Dendritic cell treated with granulocyte-macrophage colony-stimulating factor and Interleukin-4, amounts not matched to agents 40 ng/mL and 50 ng/mL, for 4 days (primary cell): ENCODE measurements at regions of chr13 and their contacts with region 1.

Region 1: DNA sequence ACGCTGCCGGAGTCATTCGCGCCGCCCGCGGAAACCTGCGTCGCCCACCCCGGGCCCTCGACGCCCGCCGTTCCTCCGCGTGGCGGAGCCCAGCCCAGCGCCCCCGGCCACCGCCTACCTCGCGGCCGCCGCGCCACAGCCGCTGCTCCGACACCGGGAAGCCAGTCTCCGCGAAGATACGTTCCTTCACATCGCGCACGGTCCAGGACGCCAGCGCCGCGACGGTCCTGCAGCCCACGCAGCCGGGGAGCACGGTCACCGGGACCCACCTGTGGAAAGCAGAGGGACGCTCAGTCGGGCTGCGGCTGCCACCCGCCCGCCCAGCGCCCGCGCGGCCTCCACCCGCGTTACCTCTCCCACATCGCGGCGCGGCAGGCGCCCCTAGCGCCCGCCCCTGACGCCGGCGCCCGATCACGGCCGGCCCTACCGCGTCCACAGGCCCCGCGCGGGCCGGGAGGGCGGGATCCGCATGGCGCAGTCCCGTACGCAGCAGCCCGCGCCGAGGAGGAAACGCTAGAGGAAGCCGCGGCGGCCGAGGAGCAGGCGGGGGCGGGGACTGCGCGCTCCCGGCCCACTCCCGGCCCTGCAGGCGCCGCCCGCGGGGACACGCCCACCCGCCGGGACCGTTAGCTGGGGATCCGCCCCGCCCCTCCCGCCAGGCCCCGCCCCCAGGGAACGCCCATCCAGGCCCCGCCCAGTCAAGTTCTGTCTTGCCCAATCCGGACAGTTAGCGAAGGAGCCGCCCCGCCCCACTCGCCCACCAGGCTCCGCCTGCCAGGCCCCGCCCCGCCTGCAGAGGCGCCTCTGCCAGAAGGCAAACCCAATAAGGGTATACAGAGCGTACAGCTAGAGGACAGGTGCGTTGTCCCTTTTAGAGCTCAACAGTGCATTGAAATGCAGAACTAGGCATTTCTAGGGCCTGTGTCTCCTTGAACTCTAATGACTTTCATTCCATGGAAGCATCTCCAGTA is 58.2 kb downstream of the SACS start:
- H3K4me3 Mint-ChIP-seq: peak overlapping the region; percentile 73
- H3K27ac Mint-ChIP-seq: peak overlapping the region; percentile 55
- H3K4me1 Mint-ChIP-seq: peaks cover 52% of the 10 kb centered on the region
- H3K27me3 Mint-ChIP-seq: peaks cover 11% of the 10 kb centered on the region

Region 2: GRCh38 chr13:21613791-21614190 is 1761.5 kb before region 1 on chr13:
- intact Hi-C with region 1: loop called (anchors 5 kb)
- H3K4me3 Mint-ChIP-seq: no peak overlapping the region
- H3K27ac Mint-ChIP-seq: no peak overlapping the region
- H3K4me1 Mint-ChIP-seq: peaks cover 6% of the 10 kb centered on the region
- H3K27me3 Mint-ChIP-seq: peaks cover 2% of the 10 kb centered on the region

Region 3: GRCh38 chr13:23466144-23467002 is 91.1 kb after region 1 on chr13:
- intact Hi-C with region 1: loop called (anchors 10 kb)
- H3K4me3 Mint-ChIP-seq: peak overlapping the region; percentile 74
- H3K27ac Mint-ChIP-seq: peak overlapping the region; percentile 31
- H3K4me1 Mint-ChIP-seq: peaks cover 33% of the 10 kb centered on the region
- H3K27me3 Mint-ChIP-seq: peaks cover 11% of the 10 kb centered on the region

Region 4: DNA sequence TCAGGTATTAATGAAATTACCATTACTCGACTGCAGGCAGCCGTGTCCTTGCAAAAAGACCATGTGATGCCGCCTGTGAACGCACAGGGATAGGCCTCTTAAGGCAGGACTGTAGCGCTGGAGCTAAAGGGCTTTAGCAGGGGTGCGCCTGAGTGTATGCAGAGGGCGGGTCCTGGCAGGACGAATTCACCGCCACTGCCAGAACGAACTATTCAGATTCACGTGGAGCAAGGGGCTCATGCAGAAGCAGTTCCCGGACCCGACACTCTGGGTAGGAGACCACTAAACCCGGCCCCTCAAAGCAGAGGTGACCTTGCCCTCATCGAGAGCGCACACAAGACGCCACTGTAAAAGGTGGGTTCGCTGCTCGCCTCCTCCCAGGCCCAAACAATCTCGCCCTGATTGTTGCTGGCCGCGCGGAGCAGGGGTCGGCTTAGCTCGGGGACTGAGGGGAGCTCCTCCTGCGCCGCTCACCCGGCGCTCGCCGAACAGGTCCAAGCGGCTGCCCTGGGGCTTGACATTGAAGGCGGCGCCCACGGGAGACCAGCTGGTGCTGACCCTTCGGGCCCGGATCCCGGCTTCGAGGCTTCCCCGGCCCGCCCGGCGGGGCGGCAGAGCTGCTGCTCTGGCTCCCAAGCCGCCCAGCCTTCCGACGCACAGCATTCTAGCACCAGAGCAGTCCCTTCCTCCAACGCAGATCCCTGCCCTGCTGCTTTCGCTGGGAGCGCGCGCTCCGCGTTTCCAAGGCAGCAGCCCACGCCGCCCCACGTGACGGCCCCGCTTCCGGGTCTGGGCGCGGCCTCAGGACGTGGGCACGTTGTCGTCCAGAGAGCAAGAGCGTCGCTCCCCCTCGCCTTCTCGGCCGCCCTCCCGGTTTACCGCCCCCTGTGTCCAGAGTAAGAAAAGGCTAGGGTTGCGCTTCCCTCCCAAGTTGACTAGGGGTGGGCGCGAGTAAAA is 513.6 kb after region 1 on chr13 and contains the start of gene MIPEP:
- intact Hi-C with region 1: loop called (anchors 10 kb)
- H3K4me3 Mint-ChIP-seq: peak within 1 kb of the TSS; percentile 90
- H3K27ac Mint-ChIP-seq: peak within 1 kb of the TSS; percentile 87
- H3K4me1 Mint-ChIP-seq: peaks cover 15% of the 10 kb centered on the region
- H3K27me3 Mint-ChIP-seq: no peaks in the 10 kb centered on the region

Region 5: GRCh38 chr13:25301347-25302047 is 1926.2 kb after region 1 on chr13 and contains the start of gene NUP58:
- intact Hi-C with region 1: loop called (anchors 10 kb)
- H3K4me3 Mint-ChIP-seq: peak within 1 kb of the TSS; percentile 86
- H3K27ac Mint-ChIP-seq: peak within 1 kb of the TSS; percentile 89
- H3K4me1 Mint-ChIP-seq: peaks cover 50% of the 10 kb centered on the region
- H3K27me3 Mint-ChIP-seq: peaks cover 8% of the 10 kb centered on the region